Transverse colon (tissue), 4 donors: ENCODE measurements at regions of chr12 and their contacts with region 1.

Region 1: GRCh38 chr12:131642101-131642540 is 68.8 kb upstream of the SFSWAP start:
- DNase-seq: no peak
- H3K4me3 ChIP-seq: no peak overlapping the region
- H3K27ac ChIP-seq: no peak overlapping the region
- H3K4me1 ChIP-seq: no peaks in the 10 kb centered on the region
- H3K27me3 ChIP-seq: peaks cover 7% of the 10 kb centered on the region
- CTCF ChIP-seq: no peak
- EP300 ChIP-seq: no peak
- POLR2A ChIP-seq: no peak

Region 2: GRCh38 chr12:131311764-131312163 is 330.4 kb before region 1 on chr12:
- in situ Hi-C with region 1: loop called in 1 of 4 experiments (anchors 5 kb)
- intact Hi-C with region 1: no loop called
- DNase-seq: no peak
- H3K4me3 ChIP-seq: no peak overlapping the region
- H3K27ac ChIP-seq: no peak overlapping the region
- H3K4me1 ChIP-seq: no peaks in the 10 kb centered on the region
- H3K27me3 ChIP-seq: peaks cover 3% of the 10 kb centered on the region
- CTCF ChIP-seq: no peak
- EP300 ChIP-seq: no peak
- POLR2A ChIP-seq: no peak